HepG2 (cell line): ENCODE measurements at regions of chr2 and their contacts with region 1.

Region 1: DNA sequence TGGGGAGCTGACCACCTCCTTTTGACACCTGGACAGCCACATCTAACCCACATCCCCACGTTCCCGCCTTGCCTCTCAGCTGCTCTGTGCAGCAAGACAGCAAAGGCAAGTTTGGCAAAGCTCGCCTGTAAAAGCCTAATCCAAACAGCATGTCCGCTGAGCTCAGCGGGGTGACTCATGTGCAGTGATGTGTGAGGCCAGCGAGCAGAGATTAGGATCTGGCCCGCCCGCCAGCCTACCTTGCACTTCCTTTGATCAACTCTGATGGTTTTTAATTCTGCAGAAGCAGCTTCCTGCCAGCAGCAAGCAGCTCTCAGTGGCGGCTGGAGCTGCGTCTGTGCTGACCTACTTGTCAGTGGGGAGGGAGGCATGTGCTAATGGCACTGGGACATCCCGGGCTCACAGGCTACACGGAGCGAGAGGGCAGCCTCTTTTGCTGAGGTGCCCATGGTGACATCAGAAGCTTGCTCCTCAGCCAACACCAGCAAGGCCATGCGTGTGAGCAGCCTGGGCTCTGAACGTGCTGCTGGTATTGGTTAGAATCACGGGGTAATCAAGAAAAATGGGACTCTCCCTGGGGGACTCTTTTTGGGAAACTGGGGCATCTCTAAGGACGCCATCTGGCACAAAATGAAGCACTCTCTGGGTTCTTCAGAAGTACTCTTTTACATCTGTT is 36.0 kb upstream of the EML4 start:
- DNase-seq: peak; percentile 98
- ATAC-seq: peak; percentile 87
- H3K4me3 ChIP-seq: peak overlapping the region in 2 of 3 experiments; percentile 11 to 53; a peak in 3 of 6 replicates
- H3K27ac ChIP-seq: peak overlapping the region; percentile 86
- H3K4me1 ChIP-seq: peaks cover 100% of the 10 kb centered on the region
- H3K27me3 ChIP-seq: no peaks in the 10 kb centered on the region
- CTCF ChIP-seq: peak; percentile 19; the same call in 1 of the 2 replicates
- EP300 ChIP-seq: peak; percentile 23 to 95; a peak in 2 of 4 replicates
- POLR2A ChIP-seq: peak; percentile 85 to 88
- RAD21 ChIP-seq: no peak; the same call in 1 of the 2 replicates

Region 2: DNA sequence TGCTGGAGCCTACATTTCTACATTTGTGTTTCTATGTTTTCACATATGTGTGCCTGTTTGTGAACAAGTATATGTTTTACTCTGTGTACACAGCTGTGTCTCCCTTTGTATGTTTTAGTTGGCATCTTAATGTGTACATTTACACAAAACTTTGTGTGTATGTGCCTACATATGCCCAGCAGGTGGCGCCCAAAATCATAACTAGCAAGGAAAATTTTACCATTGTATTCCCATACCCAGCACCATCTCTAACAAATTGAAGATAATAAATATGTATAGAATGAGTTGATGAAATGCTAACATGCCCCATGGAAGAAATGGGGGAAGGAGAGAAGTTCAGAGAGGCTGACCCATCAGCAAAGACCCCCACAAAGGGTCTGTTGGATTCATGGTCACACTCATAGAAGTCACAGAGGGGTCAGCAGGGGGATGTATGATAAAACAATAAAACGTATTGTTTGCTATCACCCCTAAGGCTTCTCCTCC is 37.1 kb before region 1 on chr2:
- CTCF ChIA-PET with region 1: interaction called, 3 read pairs
- POLR2A ChIA-PET with region 1: interaction called, 42 read pairs
- in situ Hi-C with region 1: no loop called
- intact Hi-C with region 1: loop called (anchors 2 kb)
- DNase-seq: peak; percentile 81
- ATAC-seq: peak; percentile 20
- H3K4me3 ChIP-seq: no peak overlapping the region
- H3K27ac ChIP-seq: peak overlapping the region; percentile 1
- H3K4me1 ChIP-seq: peaks cover 86% of the 10 kb centered on the region
- H3K27me3 ChIP-seq: no peaks in the 10 kb centered on the region
- CTCF ChIP-seq: peak; percentile 88
- EP300 ChIP-seq: 0 out of 4 replicates have a peak, but pooled peaks of 1 of the 2 experiments have one; percentile 58
- POLR2A ChIP-seq: no peak
- RAD21 ChIP-seq: peak; percentile 88

Region 3: DNA sequence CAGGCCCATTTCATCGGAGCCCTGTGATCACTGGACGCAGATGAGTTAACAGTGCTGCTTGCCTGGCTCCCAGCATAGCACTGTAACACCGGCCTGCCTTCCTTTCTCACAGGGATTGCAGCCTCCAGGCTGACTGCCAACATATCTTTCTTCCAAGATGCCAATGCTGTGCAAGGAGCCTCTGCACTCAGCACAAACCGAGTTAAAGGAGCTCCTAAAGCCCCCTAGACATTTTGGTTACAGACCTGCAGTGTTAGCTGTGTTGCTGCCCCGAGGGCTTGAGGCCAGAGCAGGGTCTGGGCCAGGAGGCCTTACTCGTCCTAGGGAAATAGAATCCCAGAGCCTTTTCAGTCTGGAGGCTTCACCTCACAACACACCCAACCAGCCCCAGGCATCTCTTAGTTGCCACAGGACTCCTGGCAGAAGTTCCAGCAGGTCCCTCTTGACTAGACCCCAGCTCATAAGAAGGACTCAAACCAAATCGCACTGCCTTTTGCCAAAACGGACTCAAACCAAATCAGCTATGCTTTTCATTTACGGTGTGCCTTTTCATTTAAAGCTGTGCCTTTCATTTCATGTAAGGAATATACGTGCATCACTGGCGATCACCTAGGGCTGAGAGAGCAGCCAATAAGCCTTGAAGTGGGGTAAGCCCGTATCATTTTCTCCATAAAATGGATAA is 22.3 kb before region 1 on chr2:
- CTCF ChIA-PET with region 1: no interaction called
- POLR2A ChIA-PET with region 1: interaction called, 110 read pairs
- in situ Hi-C with region 1: no loop called
- intact Hi-C with region 1: no loop called
- DNase-seq: no peak
- ATAC-seq: peak; percentile 68
- H3K4me3 ChIP-seq: peak overlapping the region in 1 of 3 experiments; percentile 25; a peak in 2 of 6 replicates
- H3K27ac ChIP-seq: peak overlapping the region; percentile 54
- H3K4me1 ChIP-seq: peaks cover 95% of the 10 kb centered on the region
- H3K27me3 ChIP-seq: no peaks in the 10 kb centered on the region
- CTCF ChIP-seq: no peak
- EP300 ChIP-seq: no peak
- POLR2A ChIP-seq: no peak
- RAD21 ChIP-seq: no peak

Region 4: DNA sequence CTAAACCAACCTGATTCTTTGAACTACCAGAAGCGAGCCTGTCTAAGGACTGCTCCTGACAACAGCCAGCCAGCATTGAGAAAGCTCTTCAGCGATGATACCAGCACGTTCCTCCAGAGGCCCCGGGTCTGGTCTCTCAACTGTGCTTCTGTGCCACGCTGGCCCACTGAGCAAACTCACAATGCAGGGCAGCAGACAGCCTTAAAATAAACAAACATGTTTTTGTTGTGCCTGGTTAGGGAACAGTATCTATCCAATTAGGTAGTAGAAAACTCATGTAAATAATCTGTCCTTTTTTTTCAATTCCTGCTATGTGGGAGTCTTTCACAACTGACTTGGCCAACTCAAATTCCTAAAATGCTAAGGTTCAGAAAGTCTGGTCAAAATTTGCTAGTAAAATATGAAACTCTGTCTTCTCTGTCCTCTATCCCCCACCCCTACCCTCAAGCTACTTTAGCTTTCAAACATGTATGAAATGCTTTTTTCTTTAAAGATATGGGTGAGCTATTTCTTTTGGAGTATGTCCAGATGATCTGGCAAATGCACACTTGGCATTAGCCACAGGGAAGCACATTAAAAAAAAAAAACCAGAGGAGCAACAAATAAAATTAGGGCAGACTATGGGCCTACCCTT is 14.7 kb after region 1 on chr2:
- CTCF ChIA-PET with region 1: no interaction called
- POLR2A ChIA-PET with region 1: interaction called, 77 read pairs
- in situ Hi-C with region 1: no loop called
- intact Hi-C with region 1: no loop called
- DNase-seq: peak; percentile 44
- ATAC-seq: peak; percentile 95
- H3K4me3 ChIP-seq: peak overlapping the region in 1 of 3 experiments; percentile 18; a peak in 2 of 6 replicates
- H3K27ac ChIP-seq: peak overlapping the region; percentile 50
- H3K4me1 ChIP-seq: peaks cover 56% of the 10 kb centered on the region
- H3K27me3 ChIP-seq: no peaks in the 10 kb centered on the region
- CTCF ChIP-seq: 0 out of 2 replicates have a peak, but pooled peaks have one; percentile 4
- EP300 ChIP-seq: no peak
- POLR2A ChIP-seq: 0 out of 4 replicates have a peak, but pooled peaks of 1 of the 2 experiments have one; percentile 25
- RAD21 ChIP-seq: no peak

Region 5: GRCh38 chr2:42183775-42184174 is 50.7 kb after region 1 on chr2:
- CTCF ChIA-PET with region 1: no interaction called
- POLR2A ChIA-PET with region 1: interaction called, 35 read pairs
- in situ Hi-C with region 1: no loop called
- intact Hi-C with region 1: no loop called
- DNase-seq: no peak
- ATAC-seq: no peak
- H3K4me3 ChIP-seq: peak overlapping the region in 2 of 3 experiments; percentile 6 to 22; a peak in 1 of 6 replicates
- H3K27ac ChIP-seq: peak overlapping the region; percentile 6
- H3K4me1 ChIP-seq: peaks cover 100% of the 10 kb centered on the region
- H3K27me3 ChIP-seq: no peaks in the 10 kb centered on the region
- CTCF ChIP-seq: no peak
- EP300 ChIP-seq: no peak
- POLR2A ChIP-seq: no peak
- RAD21 ChIP-seq: no peak

Region 6: GRCh38 chr2:42196403-42197267 is 63.5 kb after region 1 on chr2:
- CTCF ChIA-PET with region 1: no interaction called
- POLR2A ChIA-PET with region 1: interaction called, 35 read pairs
- in situ Hi-C with region 1: no loop called
- intact Hi-C with region 1: loop called (anchors 2 kb)
- DNase-seq: peak; percentile 83
- ATAC-seq: peak; percentile 73
- H3K4me3 ChIP-seq: peak overlapping the region in 1 of 3 experiments; percentile 41; a peak in 1 of 6 replicates
- H3K27ac ChIP-seq: peak overlapping the region; percentile 78
- H3K4me1 ChIP-seq: peaks cover 100% of the 10 kb centered on the region
- H3K27me3 ChIP-seq: no peaks in the 10 kb centered on the region
- CTCF ChIP-seq: peak; percentile 80
- EP300 ChIP-seq: peak; percentile 62 to 87
- POLR2A ChIP-seq: no peak
- RAD21 ChIP-seq: peak; percentile 85